ENCODE measurements at regions of chr15 and their contacts with region 1.

Region 1: GRCh38 chr15:91965501-91966184 is 112.1 kb downstream of the SLCO3A1 start:
- DNase-seq: no peak
- H3K4me3 ChIP-seq: no peak overlapping the region
- H3K27ac ChIP-seq: no peak overlapping the region
- H3K4me1 ChIP-seq: peaks cover 0 to 4% (median 2%) of the 10 kb centered on the region in 4 experiments; a peak in 5 of 7 replicates
- H3K27me3 ChIP-seq: no peaks in the 10 kb centered on the region
- CTCF ChIP-seq: no peak
- EP300 ChIP-seq: no peak
- POLR2A ChIP-seq: no peak
- RAD21 ChIP-seq: no peak

Region 2: GRCh38 chr15:91482795-91483194 is 482.8 kb before region 1 on chr15:
- CTCF ChIA-PET with region 1: no interaction called
- POLR2A ChIA-PET with region 1: no interaction called
- DNase-seq: no peak
- H3K4me3 ChIP-seq: no peak overlapping the region
- H3K27ac ChIP-seq: no peak overlapping the region
- H3K4me1 ChIP-seq: no peaks in the 10 kb centered on the region
- H3K27me3 ChIP-seq: no peaks in the 10 kb centered on the region
- CTCF ChIP-seq: no peak
- EP300 ChIP-seq: no peak
- POLR2A ChIP-seq: no peak
- RAD21 ChIP-seq: no peak

Region 3: DNA sequence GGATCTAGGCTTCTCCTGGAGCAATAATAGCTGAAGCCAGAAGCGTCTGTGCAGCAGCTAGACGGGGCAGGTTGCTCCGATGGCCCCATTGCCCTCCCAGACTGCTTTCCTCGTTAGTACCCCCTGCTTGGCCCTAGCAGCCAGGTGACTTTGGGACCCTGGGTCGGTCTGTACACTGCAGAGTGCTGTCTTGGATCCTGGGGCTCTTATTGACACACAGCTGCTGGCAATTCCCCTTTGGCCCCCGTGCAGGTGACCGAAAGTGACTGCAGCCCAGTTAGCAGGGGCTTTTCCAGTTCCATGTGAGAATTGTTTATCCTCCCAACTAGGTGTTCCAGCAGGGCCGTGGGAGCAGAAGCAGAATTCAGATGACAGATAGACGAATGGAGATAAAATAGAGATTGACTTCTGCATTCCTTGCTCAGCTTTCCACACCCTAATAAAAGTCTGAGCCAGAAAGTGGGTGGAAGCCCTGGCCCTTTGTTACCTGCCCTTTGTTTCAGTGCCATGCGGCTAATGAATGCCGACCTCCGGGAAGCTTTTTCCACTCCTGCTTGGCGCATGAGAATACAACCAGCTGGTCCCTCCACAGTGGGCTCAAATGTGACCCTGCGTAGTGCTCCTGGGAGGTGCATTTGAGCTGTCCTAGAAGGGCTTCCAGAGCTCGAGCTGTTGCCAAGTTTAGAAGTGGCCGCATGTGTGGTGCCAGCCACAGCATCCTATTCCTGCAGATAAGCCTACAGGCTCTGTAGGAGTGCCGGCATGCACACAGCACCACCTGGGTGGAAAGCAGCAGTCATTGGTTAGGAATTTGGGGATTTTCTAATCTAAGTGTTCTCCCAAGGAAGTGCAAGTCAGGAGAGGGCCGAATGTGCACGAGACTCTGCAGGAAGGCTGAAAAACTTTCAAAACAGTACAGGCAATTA is 17.7 kb before region 1 on chr15:
- CTCF ChIA-PET with region 1: interaction called, 13 read pairs
- POLR2A ChIA-PET with region 1: interaction called, 3 read pairs
- DNase-seq: peak; percentile 56 to 59
- H3K4me3 ChIP-seq: peak overlapping the region in 2 of 4 experiments; percentile 6 to 16; a peak in 1 of 8 replicates
- H3K27ac ChIP-seq: peak overlapping the region; percentile 76
- H3K4me1 ChIP-seq: peaks cover 21 to 40% (median 25%) of the 10 kb centered on the region in 4 experiments
- H3K27me3 ChIP-seq: no peaks in the 10 kb centered on the region
- CTCF ChIP-seq: no peak
- EP300 ChIP-seq: 0 out of 3 replicates have a peak, but pooled peaks of 1 of the 2 experiments have one; percentile 8
- POLR2A ChIP-seq: peak; percentile 22 to 53
- RAD21 ChIP-seq: 0 out of 4 replicates have a peak, but pooled peaks of 1 of the 2 experiments have one; percentile 1

Region 4: DNA sequence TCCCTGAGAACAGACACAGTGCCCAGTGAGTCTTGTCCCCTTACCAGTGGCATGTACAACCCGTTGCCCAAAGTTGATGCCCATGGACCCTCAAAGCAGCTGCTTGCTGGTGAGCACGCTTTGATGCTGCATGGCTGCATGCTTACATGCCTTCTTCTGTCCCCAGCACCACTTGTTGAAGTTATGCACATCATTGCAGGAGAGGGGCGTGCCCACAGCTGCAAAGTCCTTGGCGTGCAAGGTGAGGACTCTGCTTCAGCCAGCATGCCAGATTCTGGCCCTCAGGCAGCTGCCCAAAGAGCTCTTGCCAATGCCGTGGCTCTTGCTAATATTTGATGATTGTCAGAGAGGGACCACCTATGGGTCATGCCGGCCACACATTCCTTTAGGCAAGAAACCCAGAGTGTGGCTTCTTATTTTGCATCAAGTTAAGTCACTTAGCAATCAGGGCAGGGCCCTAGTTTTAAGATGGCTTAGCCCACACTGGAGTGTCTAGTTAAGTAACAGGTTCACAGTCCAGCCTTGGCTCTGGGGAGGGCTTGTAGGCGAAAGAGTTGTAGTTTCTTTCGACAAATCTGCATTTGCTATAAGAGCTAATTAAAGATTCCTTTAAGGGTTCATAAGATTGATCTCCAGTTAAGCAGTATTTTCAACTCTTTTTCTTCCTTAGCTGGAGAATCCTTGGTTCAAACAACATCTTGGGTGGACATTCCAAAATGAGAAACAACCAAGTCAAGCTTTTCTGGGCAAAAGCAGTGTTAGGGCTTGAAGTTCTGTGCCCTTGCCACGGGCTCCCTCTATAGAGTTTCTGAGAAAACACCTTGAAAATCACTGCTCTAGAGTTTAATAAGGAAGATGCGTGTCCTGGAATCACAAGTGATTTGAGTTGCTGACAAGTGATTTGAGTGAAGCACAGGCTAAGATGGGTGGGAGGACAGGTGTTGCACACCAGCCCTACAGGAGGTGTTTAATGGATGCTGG is 16.5 kb after region 1 on chr15:
- CTCF ChIA-PET with region 1: interaction called, 52 read pairs
- POLR2A ChIA-PET with region 1: no interaction called
- DNase-seq: no peak
- H3K4me3 ChIP-seq: no peak overlapping the region
- H3K27ac ChIP-seq: no peak overlapping the region
- H3K4me1 ChIP-seq: peaks cover 0 to 3% (median 0%) of the 10 kb centered on the region in 4 experiments; a peak in 1 of 7 replicates
- H3K27me3 ChIP-seq: no peaks in the 10 kb centered on the region
- CTCF ChIP-seq: no peak
- EP300 ChIP-seq: no peak
- POLR2A ChIP-seq: no peak
- RAD21 ChIP-seq: peak; percentile 19 to 32; a peak in 2 of 4 replicates

Region 5: DNA sequence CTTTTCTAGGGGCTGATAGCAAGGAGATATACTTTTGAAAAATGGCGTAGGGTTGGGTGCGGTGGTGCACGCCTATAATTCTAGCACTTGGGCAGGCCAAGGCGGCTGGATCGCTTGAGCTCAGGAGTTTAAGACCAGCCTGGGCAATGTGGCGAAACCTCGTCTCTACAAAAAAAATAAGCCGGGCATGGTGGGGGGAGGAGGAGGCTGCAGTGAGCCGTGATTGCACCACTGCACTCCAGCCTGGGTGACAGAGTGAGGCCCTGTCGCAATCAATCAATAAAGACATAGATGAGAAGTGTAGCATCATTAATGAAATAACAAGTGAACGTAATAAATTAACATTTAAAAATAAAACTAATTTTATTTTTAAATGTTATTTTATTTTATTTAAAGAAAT is 22.4 kb after region 1 on chr15:
- CTCF ChIA-PET with region 1: interaction called, 52 read pairs
- POLR2A ChIA-PET with region 1: no interaction called
- DNase-seq: no peak
- H3K4me3 ChIP-seq: no peak overlapping the region
- H3K27ac ChIP-seq: no peak overlapping the region
- H3K4me1 ChIP-seq: peaks cover 0 to 4% (median 1%) of the 10 kb centered on the region in 4 experiments; a peak in 1 of 7 replicates
- H3K27me3 ChIP-seq: no peaks in the 10 kb centered on the region
- CTCF ChIP-seq: no peak
- EP300 ChIP-seq: no peak
- POLR2A ChIP-seq: no peak
- RAD21 ChIP-seq: no peak

Region 6: GRCh38 chr15:92205255-92205739 is 239.7 kb after region 1 on chr15:
- CTCF ChIA-PET with region 1: no interaction called
- POLR2A ChIA-PET with region 1: no interaction called
- DNase-seq: peak in 1 of 2 experiments; percentile 50
- H3K4me3 ChIP-seq: no peak overlapping the region
- H3K27ac ChIP-seq: no peak overlapping the region
- H3K4me1 ChIP-seq: peaks cover 2 to 9% (median 5%) of the 10 kb centered on the region in 4 experiments; a peak in 5 of 7 replicates
- H3K27me3 ChIP-seq: no peaks in the 10 kb centered on the region
- CTCF ChIP-seq: peak in 2 of 3 experiments; percentile 52 to 63; a peak in 3 of 4 replicates
- EP300 ChIP-seq: no peak
- POLR2A ChIP-seq: no peak
- RAD21 ChIP-seq: peak; percentile 64 to 73

Measured in H1 (cell line).